Posterior cingulate gyrus (tissue), 11 donors: ENCODE measurements at regions of chr15 and their contacts with region 1.

Region 1: GRCh38 chr15:101652098-101652782 is at the start of gene TM2D3:
- DNase-seq: peak; percentile 85 to 98 (median 92)

Region 2: DNA sequence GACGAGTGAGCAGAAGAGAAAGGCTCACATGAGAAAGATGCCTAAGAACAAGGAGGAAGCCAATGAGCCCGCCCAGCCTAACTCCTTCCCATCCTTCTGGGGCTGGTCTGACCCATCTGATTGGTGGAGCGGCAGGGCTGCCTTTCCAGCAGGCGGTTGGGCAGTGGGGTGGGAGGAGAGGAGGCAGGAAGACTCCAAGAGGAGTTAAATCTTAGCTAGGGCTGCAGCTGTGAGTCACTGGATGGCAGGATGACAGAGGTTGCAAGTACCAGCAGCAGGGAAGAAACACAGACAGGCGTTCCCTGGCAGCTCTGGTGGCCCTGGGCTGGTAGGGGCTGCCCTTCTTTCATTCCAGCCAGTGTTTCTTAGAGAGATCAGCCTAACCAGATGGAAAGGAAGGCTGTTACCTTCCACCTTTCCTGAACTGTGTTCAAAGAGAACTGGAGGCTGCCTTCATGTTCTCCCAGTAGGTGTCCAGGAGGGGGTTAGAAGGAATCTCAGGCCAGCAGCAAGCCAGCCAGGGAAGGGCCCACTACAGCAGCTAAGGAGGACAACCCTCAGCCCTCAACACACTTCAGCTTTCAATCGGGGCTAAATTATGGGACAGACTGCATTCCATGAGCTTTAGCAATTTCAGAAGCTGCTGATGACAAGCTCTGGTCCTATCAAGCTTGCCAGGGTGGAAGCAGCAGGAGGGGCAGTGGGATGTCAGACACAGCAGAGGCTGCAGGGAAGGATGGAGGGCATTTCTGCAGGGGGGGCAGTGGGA is 450.6 kb before region 1 on chr15:
- intact Hi-C with region 1: no loop called
- DNase-seq: peak; percentile 45 to 98 (median 84)

Region 3: DNA sequence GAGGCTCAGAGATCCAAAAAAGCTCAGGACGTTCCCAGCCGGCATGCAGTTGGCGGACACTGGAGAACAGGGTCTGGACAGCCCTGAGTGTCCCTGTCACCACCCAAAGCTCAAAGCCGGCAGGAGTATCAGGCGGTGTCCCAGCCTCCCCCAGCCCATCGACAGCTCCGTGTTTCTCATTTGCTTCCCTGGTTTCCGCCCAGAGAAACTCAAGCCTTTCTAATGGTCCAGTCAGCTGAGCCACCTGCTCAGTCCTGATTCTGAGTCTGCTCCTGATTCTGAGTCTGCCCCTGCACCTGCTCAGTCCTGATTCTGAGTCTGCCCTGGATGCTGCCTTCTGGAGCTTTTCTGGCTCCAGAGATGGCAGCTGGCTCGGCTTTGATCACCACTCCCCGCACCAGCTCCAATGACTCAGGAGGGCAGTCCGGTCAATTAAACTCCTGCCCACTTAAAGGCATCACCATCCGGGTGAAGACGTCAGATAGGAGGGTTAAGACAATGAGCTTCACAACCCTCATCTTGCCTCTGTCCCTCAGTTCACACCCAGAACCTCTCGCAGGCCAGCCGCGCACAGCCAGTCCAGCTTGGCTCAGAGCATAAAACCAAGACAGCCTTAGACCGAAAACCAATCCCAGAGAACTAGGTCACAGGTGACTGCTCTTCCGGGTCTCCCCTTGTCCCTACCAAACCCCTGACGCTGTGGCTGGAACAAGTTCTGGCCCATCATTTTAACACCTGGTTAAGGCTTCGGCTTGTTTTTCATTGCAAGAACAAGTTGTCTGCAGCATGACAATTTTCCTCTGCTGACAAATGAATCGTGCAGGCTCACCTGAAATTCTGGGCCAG is 169.5 kb before region 1 on chr15:
- intact Hi-C with region 1: no loop called
- DNase-seq: peak in 2 of 10 donors; percentile 15

Region 4: DNA sequence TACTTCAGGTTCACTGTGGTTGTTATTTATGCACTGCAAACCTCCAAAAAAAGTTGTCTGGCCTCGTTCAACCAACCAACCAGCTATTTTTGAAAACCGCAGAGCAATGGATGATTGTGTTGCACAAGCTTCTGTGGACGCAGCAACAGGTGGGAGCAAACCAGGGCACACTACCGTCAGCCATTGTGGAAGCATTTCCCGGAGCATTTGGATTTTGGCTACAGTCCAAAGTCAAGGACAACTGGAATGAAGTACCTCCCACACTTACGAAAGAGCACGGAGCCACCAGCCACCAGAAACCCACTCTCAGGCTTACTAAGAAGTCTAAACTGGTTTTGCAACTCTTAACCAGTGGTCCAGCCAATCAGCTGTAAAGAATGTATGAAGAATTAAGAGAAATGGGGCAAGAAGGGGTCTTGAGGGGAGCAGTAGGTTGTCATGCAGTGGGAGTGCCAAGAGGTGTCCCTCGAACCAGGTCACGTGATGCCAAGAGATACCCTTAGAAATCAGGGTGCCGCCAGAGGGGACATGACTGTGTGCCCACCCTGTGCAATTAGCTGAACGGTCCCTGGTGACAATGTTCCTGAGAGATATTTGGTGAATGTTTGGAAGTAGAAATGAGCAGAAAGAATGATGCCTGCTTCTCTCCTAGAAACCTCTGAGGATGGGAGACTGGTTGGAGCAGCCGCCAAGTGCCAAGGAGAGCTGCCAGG is 93.9 kb before region 1 on chr15:
- intact Hi-C with region 1: no loop called
- DNase-seq: no peak

Region 5: DNA sequence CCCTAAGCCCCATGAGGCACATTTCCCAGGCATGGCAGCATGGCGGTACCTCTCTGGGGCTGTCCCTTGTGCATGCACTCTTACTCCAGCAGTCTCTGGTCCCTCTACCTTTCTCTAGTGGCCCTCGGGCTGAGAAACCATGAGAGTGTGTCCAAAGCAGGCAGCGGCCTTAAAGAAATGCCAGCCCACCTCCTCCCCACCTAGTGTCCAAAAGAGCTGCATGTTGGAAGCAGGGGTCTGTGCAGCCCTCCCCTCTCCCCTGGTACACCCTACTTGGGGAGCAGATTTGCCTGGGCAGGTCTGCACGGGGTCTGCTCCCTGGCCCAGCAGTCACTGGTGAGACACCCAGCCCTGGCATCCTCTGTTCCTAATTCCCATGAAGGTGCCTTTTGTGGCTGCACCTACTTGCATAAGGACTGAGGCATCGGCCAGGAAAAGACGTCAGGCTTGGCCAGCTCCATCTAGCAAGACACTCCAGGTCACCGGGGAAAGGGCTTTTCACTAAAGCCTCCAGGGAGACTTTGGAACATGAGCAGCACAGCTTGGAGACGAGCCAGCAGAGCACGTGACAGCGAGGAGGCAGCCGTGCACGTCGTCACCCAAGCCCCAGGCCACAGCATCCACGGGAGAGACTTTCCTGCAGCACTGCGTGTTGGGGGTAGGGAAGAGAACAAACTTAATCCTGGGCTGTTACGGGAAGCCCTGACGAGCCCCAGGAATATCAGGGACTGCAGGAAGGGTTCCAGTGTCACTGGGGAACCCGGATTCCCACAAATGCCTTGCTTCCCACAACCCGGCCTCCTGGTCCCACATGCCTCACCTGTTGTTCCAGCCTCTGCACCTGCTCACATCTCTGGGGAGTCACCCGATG is 38.9 kb before region 1 on chr15:
- intact Hi-C with region 1: no loop called
- DNase-seq: peak in 7 of 10 donors; percentile 39 to 91 (median 60)

Region 6: GRCh38 chr15:101723874-101724674 is 71.8 kb after region 1 on chr15 and contains the start of gene TARS3:
- intact Hi-C with region 1: loop called (anchors 1 kb)
- DNase-seq: peak; percentile 90 to 98 (median 94)